IMR-90 (cell line): ENCODE measurements at regions of chr14 and their contacts with region 1.

Region 1: DNA sequence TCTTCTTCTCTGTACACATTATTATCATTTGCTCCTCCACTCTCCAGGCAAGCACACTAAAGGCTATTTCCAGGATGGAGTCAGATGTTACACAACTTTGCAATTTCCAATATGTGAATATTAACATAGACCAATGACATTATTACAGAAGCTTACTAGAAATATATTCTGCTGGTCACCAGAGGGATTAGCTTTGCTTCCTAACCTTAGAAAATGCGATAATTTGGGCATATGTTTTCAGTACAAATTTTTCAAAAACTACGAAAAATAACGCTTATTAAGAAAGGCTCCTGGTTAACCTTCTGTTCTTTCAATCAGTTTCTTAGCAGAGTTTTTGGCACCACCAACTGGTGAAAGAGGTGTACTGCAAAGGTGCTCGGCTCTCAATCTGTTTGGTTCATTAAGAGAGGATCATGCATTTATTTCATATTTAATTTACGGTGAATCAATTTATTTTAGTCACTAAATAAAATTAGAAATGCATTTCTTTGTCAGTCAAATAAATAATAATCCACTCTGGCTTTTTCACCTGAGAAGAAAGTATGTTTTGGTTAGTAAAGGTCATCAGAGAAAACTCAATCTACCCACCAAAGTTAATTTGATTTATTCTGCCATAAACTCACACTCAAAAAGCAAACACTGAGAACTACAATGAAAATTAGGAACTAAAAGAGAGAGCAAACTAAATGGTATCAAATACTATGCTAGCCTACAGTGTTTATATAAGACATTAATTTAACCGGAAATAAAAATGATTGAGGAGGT is 39.2 kb downstream of the EFCAB11 start:
- DNase-seq: peak; percentile 80
- ATAC-seq: peak; percentile 48
- H3K4me3 ChIP-seq: no peak overlapping the region
- H3K27ac ChIP-seq: peak overlapping the region; percentile 19; the same call in 1 of the 2 replicates
- H3K4me1 ChIP-seq: peaks cover 27% of the 10 kb centered on the region
- H3K27me3 ChIP-seq: no peaks in the 10 kb centered on the region
- CTCF ChIP-seq: peak; percentile 90
- POLR2A ChIP-seq: 0 out of 2 replicates have a peak, but pooled peaks have one; percentile 23
- RAD21 ChIP-seq: peak; percentile 90

Region 2: DNA sequence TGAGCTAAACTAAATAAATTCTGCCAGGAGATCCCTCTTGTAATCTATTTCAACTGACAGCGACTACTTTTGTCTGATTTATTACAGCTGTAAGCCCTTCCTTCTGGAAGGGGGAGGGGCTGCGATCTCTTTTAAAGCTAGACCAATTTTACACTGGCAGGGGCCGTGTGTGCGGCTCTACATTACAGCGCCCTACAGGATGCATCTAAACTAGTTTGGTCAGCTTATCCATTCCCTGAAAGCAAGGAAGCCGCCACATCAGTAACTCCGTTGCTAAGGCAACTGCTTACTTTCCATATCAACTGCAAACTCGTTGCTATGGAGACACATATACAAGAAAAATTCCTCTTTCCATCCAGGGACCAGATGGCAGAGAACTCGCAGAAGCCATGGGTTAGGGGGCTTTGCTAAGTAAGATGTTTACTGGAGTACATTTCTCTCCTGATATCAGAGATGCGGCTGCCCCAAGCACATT is 515.7 kb before region 1 on chr14:
- CTCF ChIA-PET with region 1: no interaction called
- POLR2A ChIA-PET with region 1: no interaction called
- dilution Hi-C with region 1: no loop called
- in situ Hi-C with region 1: loop called (anchors 10 kb)
- intact Hi-C with region 1: no loop called
- DNase-seq: peak; percentile 96
- ATAC-seq: peak; percentile 78
- H3K4me3 ChIP-seq: no peak overlapping the region
- H3K27ac ChIP-seq: no peak overlapping the region
- H3K4me1 ChIP-seq: peaks cover 6% of the 10 kb centered on the region
- H3K27me3 ChIP-seq: no peaks in the 10 kb centered on the region
- CTCF ChIP-seq: 0 out of 2 replicates have a peak, but pooled peaks have one; percentile 5
- POLR2A ChIP-seq: 0 out of 2 replicates have a peak, but pooled peaks have one; percentile 41
- RAD21 ChIP-seq: peak; percentile 37

Region 3: DNA sequence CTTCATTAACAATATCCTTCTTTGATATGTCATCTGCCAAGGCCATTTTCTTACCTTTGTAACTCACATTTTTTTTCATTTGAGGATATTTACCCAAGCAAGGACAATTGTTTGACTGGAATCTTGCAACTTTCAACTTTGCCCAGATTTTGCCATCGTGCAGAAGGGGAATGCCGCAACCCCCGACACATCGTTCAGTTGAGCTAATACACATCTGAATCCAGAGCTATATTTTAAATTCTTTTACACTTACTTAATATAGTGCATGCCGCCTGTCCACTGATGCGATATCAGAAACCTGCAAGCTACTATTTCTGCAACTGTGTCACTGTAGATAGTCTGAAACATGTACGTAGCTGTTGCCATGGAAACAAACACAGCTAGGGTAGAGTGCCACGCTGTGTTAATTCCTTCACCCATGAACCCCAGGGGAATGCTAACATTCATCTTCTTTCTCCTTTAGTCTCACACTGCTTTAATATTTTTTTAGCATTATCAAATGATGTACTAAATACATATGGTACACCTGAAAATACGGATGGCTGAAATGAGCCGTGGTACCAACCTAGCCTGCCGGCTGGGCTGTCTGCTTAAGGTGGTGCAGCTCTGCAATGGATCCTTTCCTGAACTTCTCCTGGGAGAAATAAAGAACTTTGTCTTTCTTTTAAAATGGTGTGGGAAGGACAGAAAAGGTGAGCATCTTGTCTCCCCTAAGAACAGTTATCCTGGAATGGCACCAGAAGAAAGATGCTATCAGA is 421.2 kb before region 1 on chr14:
- CTCF ChIA-PET with region 1: no interaction called
- POLR2A ChIA-PET with region 1: no interaction called
- dilution Hi-C with region 1: no loop called
- in situ Hi-C with region 1: no loop called
- intact Hi-C with region 1: loop called (anchors 10 kb)
- DNase-seq: no peak
- ATAC-seq: no peak
- H3K4me3 ChIP-seq: no peak overlapping the region
- H3K27ac ChIP-seq: no peak overlapping the region
- H3K4me1 ChIP-seq: peaks cover 13% of the 10 kb centered on the region
- H3K27me3 ChIP-seq: no peaks in the 10 kb centered on the region
- CTCF ChIP-seq: no peak
- POLR2A ChIP-seq: no peak
- RAD21 ChIP-seq: no peak

Region 4: DNA sequence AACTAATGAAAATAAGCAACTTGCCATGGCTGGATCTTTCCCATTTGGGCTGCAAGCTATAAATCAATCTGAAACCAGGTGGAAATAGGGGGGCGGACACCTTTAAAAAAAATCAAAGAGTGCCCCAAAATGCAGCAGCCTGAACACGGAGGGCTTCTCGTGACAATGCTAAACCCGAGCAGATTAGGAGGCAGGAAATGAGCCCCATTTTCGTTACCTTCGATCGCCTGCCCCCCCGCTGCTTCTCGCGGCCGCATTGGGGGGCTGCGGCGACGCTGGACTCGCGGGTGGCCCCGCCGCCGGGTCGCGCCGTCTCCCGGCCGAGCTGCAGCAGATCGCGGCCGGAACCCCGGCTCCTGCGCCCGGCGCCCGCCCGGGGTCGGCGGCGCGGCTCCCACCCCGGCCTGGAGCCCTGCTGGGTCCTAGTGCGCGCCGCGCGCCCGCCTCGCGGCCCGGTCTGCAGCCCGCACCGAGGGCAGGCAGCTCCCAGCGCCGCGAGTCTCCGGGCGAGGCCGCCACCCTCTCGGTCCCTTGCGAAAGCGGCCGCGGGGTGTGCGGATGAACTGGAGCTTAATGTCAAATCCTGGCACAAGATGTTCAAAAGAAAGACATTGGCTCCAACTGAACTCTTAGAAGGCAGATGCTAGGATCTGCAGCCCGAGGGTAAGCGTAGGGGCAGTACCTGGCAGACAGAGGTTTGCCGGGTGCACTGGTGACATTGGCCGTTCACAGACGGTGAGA is 296.3 kb before region 1 on chr14:
- CTCF ChIA-PET with region 1: no interaction called
- POLR2A ChIA-PET with region 1: no interaction called
- dilution Hi-C with region 1: no loop called
- in situ Hi-C with region 1: loop called (anchors 5 kb)
- intact Hi-C with region 1: loop called (anchors 1 kb)
- DNase-seq: peak; percentile 67
- ATAC-seq: peak; percentile 91
- H3K4me3 ChIP-seq: peak overlapping the region; percentile 78
- H3K27ac ChIP-seq: peak overlapping the region; percentile 87
- H3K4me1 ChIP-seq: peaks cover 12% of the 10 kb centered on the region
- H3K27me3 ChIP-seq: no peaks in the 10 kb centered on the region
- CTCF ChIP-seq: peak; percentile 4; the same call in 1 of the 2 replicates
- POLR2A ChIP-seq: peak; percentile 49; the same call in 1 of the 2 replicates
- RAD21 ChIP-seq: peak; percentile 34

Region 5: DNA sequence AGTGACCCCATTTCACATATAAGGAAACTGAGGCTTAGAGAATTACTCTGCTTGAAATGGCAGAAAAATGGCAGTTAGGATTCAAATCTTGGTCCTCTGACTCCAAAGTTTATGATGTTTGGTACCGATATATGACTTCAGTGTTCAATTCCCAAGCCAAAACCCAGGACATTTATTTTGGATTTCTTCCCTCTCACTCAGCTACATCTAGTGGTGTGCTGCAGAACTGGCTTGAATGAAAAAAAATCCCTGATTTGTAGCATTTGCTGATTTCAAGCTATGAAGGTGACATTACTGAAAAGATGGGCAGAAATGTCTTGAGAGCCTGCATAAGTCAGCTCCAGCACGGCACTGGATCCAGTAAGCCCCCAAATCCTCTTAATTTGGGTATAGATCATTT is 67.1 kb before region 1 on chr14:
- CTCF ChIA-PET with region 1: interaction called, 4 read pairs
- POLR2A ChIA-PET with region 1: interaction called, 4 read pairs
- dilution Hi-C with region 1: no loop called
- in situ Hi-C with region 1: no loop called
- intact Hi-C with region 1: loop called (anchors 1 kb)
- DNase-seq: peak; percentile 71
- ATAC-seq: 0 out of 2 replicates have a peak, but pooled peaks have one; percentile 3
- H3K4me3 ChIP-seq: no peak overlapping the region
- H3K27ac ChIP-seq: no peak overlapping the region
- H3K4me1 ChIP-seq: peaks cover 16% of the 10 kb centered on the region
- H3K27me3 ChIP-seq: no peaks in the 10 kb centered on the region
- CTCF ChIP-seq: peak; percentile 70
- POLR2A ChIP-seq: no peak
- RAD21 ChIP-seq: peak; percentile 85

Region 6: GRCh38 chr14:89983375-89983774 is 68.1 kb after region 1 on chr14:
- CTCF ChIA-PET with region 1: no interaction called
- POLR2A ChIA-PET with region 1: no interaction called
- dilution Hi-C with region 1: no loop called
- in situ Hi-C with region 1: no loop called
- intact Hi-C with region 1: no loop called
- DNase-seq: no peak
- ATAC-seq: no peak
- H3K4me3 ChIP-seq: no peak overlapping the region
- H3K27ac ChIP-seq: no peak overlapping the region
- H3K4me1 ChIP-seq: peaks cover 2% of the 10 kb centered on the region; the same call in 1 of the 2 replicates
- H3K27me3 ChIP-seq: no peaks in the 10 kb centered on the region
- CTCF ChIP-seq: no peak
- POLR2A ChIP-seq: no peak
- RAD21 ChIP-seq: no peak